ENCODE measurements at regions of chr17 and their contacts with region 1.

Region 1: DNA sequence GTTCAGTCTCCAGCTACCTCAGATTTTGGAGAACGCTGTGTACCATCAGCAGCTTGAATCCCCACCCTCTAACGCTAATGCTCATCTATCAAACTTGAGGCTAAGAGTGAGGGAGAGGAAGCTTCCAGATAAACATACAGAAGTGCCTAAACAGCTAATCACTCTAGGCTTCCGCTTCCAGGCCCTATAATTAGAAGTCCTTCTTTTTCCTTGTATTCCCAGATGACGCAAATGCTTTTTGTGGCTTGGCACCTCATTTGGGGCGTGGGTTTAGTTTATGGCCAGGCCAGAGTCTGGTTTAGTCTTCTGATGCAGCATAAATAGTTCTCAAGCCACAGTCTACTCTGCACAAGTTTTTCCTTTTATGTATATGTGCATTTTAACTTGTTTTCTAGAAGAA is 263.4 kb downstream of the BCAS3 start:
- DNase-seq: peak; percentile 67 to 90
- H3K4me3 ChIP-seq: no peak overlapping the region
- H3K27ac ChIP-seq: peak overlapping the region; percentile 73 to 76
- H3K4me1 ChIP-seq: peaks cover 0 to 5% of the 10 kb centered on the region in 2 donors
- H3K27me3 ChIP-seq: no peaks in the 10 kb centered on the region
- CTCF ChIP-seq: no peak

Region 2: DNA sequence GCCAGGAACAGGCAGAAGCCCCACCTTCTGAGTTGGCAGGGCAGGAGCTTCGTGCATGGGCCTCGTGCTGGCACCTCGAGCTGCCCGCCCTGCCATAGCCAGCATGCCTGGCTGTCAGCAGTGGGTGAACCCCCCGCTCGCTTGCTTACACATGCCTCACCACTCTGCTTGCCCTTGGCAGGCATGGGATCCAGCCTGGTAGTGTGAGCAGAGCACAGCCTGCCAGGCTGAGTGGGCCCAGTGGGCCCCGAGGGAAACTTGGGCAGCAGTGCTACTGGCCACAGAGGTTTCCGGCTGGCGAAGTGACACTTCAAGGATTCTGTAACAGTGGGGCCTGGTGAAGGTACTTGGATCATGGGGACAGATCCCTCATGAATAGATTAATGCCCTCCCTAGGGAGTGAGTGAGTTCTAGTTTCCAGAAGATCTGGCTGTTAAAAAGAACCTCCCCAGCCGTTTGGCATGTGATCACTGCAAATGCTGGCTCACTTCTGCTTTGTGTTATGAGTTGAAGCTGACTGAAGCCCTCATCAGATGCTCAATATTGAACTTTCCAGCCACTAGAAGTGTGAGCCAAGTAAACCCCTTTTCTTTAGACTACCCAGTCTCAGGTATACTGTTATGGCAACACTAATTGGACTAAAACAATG is 148.7 kb before region 1 on chr17:
- intact Hi-C with region 1: no loop called
- DNase-seq: peak; percentile 12 to 75
- H3K4me3 ChIP-seq: no peak overlapping the region
- H3K27ac ChIP-seq: peak overlapping the region; percentile 69 to 70
- H3K4me1 ChIP-seq: no peaks in the 10 kb centered on the region
- H3K27me3 ChIP-seq: no peaks in the 10 kb centered on the region
- CTCF ChIP-seq: no peak

Region 3: DNA sequence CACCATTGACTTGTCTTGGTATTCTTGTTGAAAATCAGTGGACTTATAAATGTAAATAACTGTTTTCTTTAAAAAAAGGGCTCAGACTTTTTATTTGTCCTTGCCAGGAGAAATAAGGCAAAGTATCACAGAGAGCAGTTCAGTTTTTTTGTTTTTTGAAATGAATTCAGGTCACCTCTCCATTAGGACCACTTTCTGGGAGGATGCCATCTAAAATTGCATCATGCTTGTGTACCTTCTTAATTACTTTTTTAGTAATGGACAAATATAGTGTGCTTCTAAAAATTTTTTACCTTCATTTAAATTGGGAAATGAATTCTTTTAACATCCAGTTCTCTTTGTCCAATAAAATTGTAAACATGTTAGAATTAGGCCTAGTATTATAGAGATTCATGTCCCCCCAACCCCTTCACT is 53.4 kb before region 1 on chr17:
- intact Hi-C with region 1: no loop called
- DNase-seq: no peak
- H3K4me3 ChIP-seq: peak overlapping the region in 1 of 2 donors; percentile 50
- H3K27ac ChIP-seq: peak overlapping the region; percentile 2 to 30
- H3K4me1 ChIP-seq: peaks cover 0 to 18% of the 10 kb centered on the region in 2 donors
- H3K27me3 ChIP-seq: no peaks in the 10 kb centered on the region
- CTCF ChIP-seq: no peak

Region 4: GRCh38 chr17:60901806-60902205 is 39.2 kb before region 1 on chr17:
- intact Hi-C with region 1: loop called (anchors 2 kb)
- DNase-seq: no peak
- H3K4me3 ChIP-seq: peak overlapping the region in 1 of 2 donors; percentile 26
- H3K27ac ChIP-seq: peak overlapping the region; percentile 71 to 86
- H3K4me1 ChIP-seq: peaks cover 0 to 10% of the 10 kb centered on the region in 2 donors
- H3K27me3 ChIP-seq: no peaks in the 10 kb centered on the region
- CTCF ChIP-seq: no peak

Region 5: DNA sequence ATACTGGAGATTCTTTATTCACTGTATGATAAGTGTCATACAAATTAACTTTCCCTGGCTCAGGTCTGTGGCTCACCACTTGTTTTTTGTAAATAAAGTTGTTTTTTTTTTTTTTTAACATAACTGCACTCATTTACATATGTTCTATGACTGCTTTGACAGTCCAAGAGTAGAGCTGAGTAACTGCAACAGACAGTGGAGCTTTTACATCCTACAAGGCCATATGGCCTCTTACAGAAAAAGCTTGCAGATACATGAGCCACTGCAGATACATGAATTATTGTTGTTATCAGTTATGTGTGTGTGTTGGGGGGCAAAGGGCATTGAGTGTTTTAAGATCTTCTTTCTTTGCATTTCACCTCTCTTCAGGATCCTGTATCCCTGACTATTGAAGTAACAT is 48.4 kb after region 1 on chr17:
- intact Hi-C with region 1: no loop called
- DNase-seq: no peak
- H3K4me3 ChIP-seq: no peak overlapping the region
- H3K27ac ChIP-seq: no peak overlapping the region
- H3K4me1 ChIP-seq: no peaks in the 10 kb centered on the region
- H3K27me3 ChIP-seq: no peaks in the 10 kb centered on the region
- CTCF ChIP-seq: no peak

Region 6: GRCh38 chr17:61065263-61065773 is 124.3 kb after region 1 on chr17:
- intact Hi-C with region 1: no loop called
- DNase-seq: no peak
- H3K4me3 ChIP-seq: no peak overlapping the region
- H3K27ac ChIP-seq: peak overlapping the region in 1 of 2 donors; percentile 7
- H3K4me1 ChIP-seq: peaks cover 0 to 11% of the 10 kb centered on the region in 2 donors
- H3K27me3 ChIP-seq: no peaks in the 10 kb centered on the region
- CTCF ChIP-seq: no peak